Dorsolateral prefrontal cortex (tissue), 120 donors: ENCODE measurements at regions of chr11 and their contacts with region 1.

Region 1: GRCh38 chr11:59753650-59754493 is 1.3 kb upstream of the STX3 start:
- DNase-seq: peak; percentile 74 to 92 (median 86)
- H3K4me3 ChIP-seq: peak overlapping the region; percentile 65 to 98 (median 86)
- H3K27ac ChIP-seq: peak overlapping the region in 54 of 59 donors; percentile 19 to 96 (median 90)
- H3K27me3 ChIP-seq: no peaks in the 10 kb centered on the region
- CTCF ChIP-seq: peak; percentile 87 to 98 (median 95)

Region 2: DNA sequence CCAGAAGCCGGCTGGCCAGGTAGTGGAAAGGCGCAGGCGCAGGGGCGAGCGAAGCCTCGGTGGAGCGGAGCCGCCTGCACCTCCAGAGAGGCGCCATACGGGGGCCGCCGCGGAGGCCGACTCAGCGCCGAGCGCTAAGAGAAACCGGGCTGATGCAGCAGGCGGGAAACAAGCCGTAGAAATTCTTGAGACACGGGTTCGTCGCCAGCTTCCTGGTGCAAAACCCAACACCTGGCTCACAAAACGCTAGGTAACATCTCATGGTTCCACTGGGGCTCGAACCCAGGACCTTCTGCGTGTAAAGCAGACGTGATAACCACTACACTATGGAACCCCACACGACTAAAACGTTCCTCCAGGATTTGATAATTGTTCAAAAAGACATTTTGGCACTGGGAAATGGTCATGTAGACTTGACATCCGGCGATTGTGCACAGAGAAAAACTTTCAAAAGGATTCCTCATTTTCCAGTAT is 203.5 kb before region 1 on chr11:
- intact Hi-C with region 1: loop called in 1 of 2 experiments (anchors 5 kb)
- DNase-seq: peak; percentile 57 to 86 (median 76)
- H3K4me3 ChIP-seq: peak overlapping the region; percentile 44 to 76 (median 65)
- H3K27ac ChIP-seq: peak overlapping the region; percentile 43 to 95 (median 84)
- H3K27me3 ChIP-seq: no peaks in the 10 kb centered on the region
- CTCF ChIP-seq: peak in 37 of 56 donors; percentile 18 to 56 (median 33)

Region 3: GRCh38 chr11:59668950-59669610 is 84.8 kb before region 1 on chr11 and contains the start of gene PATL1:
- intact Hi-C with region 1: loop called (anchors 1 to 5 kb)
- DNase-seq: peak; percentile 98 to 99 (median 98)
- H3K4me3 ChIP-seq: peak within 1 kb of the TSS; percentile 62 to 97 (median 87)
- H3K27ac ChIP-seq: peak within 1 kb of the TSS; percentile 91 to 100 (median 99)
- H3K27me3 ChIP-seq: no peaks in the 10 kb centered on the region
- CTCF ChIP-seq: peak in 23 of 56 donors; percentile 3 to 52 (median 29)
- total RNA-seq, gene PATL1: 14.6 to 38.0 (median 20.9) TPM

Region 4: DNA sequence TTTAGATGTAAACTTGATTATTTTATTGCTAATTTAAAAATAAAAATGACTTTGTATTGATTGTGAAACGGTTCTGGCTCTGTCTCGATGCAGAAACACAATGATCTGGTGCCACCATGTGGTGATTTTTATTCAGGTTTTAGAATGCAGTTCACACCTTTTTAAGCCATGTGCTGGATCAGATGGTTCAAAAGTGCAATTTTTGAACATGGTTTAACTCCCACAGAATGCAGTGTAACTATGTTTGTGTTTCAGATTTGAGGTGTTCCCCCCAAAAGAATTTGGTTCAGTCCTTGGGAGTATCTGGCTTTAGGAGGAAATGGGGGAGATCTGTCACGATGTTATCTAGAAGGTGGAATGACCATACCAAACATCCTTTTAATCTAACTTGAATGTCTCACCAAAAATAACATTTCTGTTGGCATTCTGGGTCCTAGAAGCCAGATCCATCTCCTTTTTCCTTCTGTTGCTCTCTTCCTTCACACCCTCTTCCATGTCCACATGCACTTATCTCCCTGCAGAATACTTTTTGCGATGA is 48.8 kb after region 1 on chr11:
- intact Hi-C with region 1: loop called (anchors 1 kb)
- DNase-seq: peak in 2 of 10 donors; percentile 30 to 35
- H3K4me3 ChIP-seq: peak overlapping the region in 23 of 59 donors; percentile 1 to 41 (median 24)
- H3K27ac ChIP-seq: peak overlapping the region in 41 of 59 donors; percentile 8 to 73 (median 44)
- H3K27me3 ChIP-seq: no peaks in the 10 kb centered on the region
- CTCF ChIP-seq: peak; percentile 65 to 93 (median 81)

Region 5: GRCh38 chr11:59810189-59810910 is 56.5 kb after region 1 on chr11 and contains the start of gene MRPL16:
- intact Hi-C with region 1: loop called in 1 of 2 experiments (anchors 2 kb)
- DNase-seq: peak; percentile 68 to 91 (median 87)
- H3K4me3 ChIP-seq: peak within 1 kb of the TSS; percentile 68 to 99 (median 91)
- H3K27ac ChIP-seq: peak within 1 kb of the TSS in 56 of 59 donors; percentile 5 to 91 (median 76)
- H3K27me3 ChIP-seq: peaks cover 0 to 10% (median 0%) of the 10 kb centered on the region in 45 donors
- CTCF ChIP-seq: peak in 41 of 56 donors; percentile 8 to 59 (median 34)
- total RNA-seq, gene MRPL16: 21.6 to 49.1 (median 35.3) TPM